ENCODE measurements at regions of chr10 and their contacts with region 1.

Region 1: DNA sequence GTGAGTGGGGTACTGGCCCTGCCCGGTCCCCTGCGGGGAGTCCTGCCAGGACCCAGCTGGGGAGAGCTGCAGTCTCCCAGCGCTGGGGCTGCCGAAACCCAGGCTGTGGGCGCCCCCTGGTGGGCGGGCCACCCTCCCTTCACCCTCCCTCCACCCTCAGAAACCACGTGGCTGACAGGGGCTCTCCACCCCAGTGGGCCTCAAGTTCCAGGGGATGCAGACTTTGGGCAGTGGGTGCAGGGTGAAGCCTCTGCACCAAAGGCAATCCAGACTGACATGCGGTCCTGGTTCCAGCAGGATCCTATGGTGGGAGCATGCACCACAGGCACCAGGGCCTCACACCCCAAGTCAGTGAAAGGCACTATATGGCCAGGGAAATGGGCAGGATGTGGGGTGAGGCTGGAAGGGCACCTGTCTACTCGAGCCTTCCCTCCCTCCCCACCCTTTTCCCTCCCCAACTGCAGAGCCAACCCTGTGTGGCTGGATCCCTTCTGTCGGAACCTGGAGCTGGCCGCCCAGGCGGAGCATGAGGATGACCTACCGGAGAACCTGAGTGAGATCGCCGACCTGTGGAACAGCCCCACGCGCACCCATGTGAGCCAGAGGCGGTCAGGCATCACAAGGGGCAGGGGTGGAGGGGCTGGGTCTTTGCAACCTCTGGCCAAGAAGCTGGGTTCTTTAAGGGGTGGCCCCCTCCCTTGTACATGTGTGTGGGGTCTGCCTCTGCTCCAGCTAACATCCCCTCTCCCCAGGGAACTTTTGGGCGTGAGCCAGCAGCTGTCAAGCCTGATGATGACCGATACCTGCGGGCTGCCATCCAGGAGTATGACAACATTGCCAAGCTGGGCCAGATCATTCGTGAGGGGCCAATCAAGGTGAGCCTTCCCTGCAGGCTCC is 38.8 kb downstream of the PSAP start:
- DNase-seq: peak; percentile 80 to 93
- ATAC-seq: peak; percentile 84
- H3K4me3 ChIP-seq: no peak overlapping the region
- H3K27ac ChIP-seq: no peak overlapping the region
- H3K4me1 ChIP-seq: no peaks in the 10 kb centered on the region
- H3K27me3 ChIP-seq: no peaks in the 10 kb centered on the region

Region 2: GRCh38 chr10:71314028-71314693 is 498.1 kb before region 1 on chr10:
- intact Hi-C with region 1: loop called (anchors 5 kb)
- DNase-seq: peak; percentile 70 to 87
- ATAC-seq: peak; percentile 75
- H3K4me3 ChIP-seq: no peak overlapping the region
- H3K27ac ChIP-seq: no peak overlapping the region
- H3K4me1 ChIP-seq: no peaks in the 10 kb centered on the region
- H3K27me3 ChIP-seq: no peaks in the 10 kb centered on the region

Region 3: DNA sequence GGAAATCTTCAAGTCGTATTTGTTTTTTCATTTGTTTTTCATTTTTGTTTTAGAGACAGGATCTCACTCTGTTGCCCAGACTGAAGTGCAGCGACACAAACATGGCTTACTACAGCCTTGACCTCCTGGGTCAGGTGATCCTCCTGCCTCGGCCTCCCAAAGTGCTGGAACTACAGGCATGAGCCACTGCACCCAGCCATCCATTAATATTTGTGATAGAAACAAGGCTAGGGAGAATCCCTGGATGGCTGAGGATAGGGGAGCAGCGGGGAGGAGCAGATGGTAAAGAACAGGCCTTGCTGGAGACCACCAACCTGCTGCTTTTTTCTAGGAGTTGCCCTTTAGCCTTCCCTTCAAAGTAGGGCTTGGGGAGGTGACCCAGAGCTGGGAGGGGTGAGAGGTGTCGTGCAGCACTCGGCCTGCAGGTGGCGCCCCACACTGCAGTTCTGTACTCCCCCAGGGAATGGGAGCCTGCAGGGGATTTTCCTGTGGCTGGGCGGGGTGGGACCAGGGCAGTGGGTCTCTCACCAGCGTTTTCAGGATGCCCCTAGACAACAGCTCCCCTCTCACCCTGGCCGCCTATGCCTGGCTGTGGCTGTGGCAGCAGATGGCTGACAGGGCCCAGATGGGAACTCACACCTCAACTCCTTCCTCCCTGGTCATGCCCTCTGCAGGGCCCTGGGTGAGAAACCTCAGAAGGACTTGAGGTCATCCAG is 428.1 kb before region 1 on chr10:
- intact Hi-C with region 1: loop called (anchors 5 kb)
- DNase-seq: peak; percentile 77 to 91
- ATAC-seq: peak; percentile 86
- H3K4me3 ChIP-seq: no peak overlapping the region
- H3K27ac ChIP-seq: no peak overlapping the region
- H3K4me1 ChIP-seq: no peaks in the 10 kb centered on the region
- H3K27me3 ChIP-seq: no peaks in the 10 kb centered on the region

Region 4: GRCh38 chr10:71389768-71390460 is 422.4 kb before region 1 on chr10:
- intact Hi-C with region 1: loop called in 1 of 2 experiments (anchors 5 kb)
- DNase-seq: no peak
- ATAC-seq: no peak
- H3K4me3 ChIP-seq: no peak overlapping the region
- H3K27ac ChIP-seq: no peak overlapping the region
- H3K4me1 ChIP-seq: no peaks in the 10 kb centered on the region
- H3K27me3 ChIP-seq: no peaks in the 10 kb centered on the region

Region 5: DNA sequence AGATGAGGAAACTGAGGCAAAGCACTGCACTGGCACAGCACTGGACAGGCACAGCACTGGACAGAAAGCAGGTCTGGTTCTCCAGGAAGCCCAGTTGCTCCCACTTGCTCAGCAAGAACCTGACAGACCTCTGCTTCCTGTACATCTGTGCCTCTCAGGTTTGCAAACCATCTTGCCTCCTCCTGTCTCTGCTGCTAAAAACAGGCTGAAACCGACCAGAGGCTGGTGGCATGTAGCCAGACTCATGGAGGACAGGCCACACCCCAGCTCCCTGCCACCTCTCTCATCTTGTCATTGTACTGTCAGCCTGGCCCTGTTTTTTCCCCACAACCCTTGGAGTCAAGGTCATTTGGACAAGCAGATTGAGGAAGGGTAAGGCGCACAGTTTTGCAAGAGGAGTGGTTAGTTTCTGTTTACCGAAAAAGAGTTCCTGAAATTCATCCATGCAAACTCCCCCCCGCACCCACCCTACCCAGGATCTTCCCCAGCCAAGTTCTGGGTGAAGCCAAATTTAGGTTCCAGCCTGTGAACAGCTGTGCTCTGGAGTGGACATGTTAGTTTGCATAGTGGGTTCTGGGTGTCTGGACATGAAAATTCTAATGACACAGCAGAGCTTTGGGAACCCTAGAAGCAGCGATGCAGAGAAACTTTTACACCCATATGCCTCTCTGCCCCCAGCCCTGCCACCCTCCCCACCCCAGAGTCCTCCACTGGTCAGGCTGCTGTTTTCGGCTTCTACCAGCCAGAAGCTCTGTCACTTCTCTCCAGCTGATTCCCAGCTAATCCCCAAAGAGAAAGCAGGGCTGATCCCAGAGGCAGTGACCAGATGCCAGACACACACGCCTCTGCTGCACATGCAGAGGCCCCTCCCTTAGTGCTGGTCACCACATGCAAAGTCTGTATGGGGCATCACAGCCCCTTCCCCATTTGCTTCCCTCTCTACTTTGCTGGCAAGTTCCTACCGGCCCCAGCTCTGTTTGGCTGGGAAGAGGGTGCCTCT is 84.2 kb before region 1 on chr10:
- intact Hi-C with region 1: no loop called
- DNase-seq: peak in 1 of 2 donors; percentile 70
- ATAC-seq: peak; percentile 60
- H3K4me3 ChIP-seq: no peak overlapping the region
- H3K27ac ChIP-seq: no peak overlapping the region
- H3K4me1 ChIP-seq: no peaks in the 10 kb centered on the region
- H3K27me3 ChIP-seq: no peaks in the 10 kb centered on the region

Region 6: DNA sequence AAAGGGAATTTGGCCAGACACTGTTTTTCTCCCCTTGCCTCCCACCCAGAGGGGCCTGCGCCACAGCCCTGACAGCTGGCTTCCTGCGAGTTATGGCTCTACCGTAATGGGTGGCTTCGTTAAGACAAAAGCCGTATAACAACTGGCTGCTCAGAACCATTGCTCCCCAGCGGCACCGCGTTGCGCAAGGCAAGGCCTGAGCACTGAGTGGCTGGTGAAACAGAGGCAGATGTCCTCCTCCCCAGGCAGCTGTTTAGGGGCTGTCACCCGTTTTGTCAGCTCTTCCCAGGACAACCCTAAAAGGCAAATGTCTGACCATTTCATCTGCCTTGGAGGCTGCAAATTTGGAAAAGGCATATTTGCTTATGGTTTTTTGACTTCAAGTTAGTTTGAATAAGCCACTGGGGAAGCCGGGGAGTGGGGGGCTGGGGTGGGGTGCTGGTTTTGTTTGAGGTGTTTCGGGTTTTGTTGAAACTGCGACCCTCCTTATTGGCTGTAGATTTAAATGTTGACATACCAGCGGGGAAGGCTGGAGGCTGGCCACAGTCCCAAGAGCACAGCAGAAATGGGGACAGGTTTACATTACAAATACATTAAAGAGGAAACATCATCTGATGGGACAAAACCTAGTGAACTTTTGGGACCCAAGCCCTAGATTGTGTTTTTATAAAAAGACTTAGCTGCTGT is 276.8 kb after region 1 on chr10:
- intact Hi-C with region 1: no loop called
- DNase-seq: no peak
- ATAC-seq: no peak
- H3K4me3 ChIP-seq: no peak overlapping the region
- H3K27ac ChIP-seq: no peak overlapping the region
- H3K4me1 ChIP-seq: no peaks in the 10 kb centered on the region
- H3K27me3 ChIP-seq: no peaks in the 10 kb centered on the region

Measured in aorta (tissue), 5 donors.